SK-N-SH (cell line): ENCODE measurements at regions of chr13 and their contacts with region 1.

Region 1: GRCh38 chr13:36431654-36432511 is at the start of gene CCNA1:
- DNase-seq: peak; percentile 83
- H3K4me3 ChIP-seq: peak within 1 kb of the TSS; percentile 44 to 51
- H3K27ac ChIP-seq: no peak within 1 kb of the TSS
- H3K4me1 ChIP-seq: peaks cover 0 to 8% of the 10 kb centered on the region in 2 experiments; a peak in 1 of 4 replicates
- H3K27me3 ChIP-seq: peaks cover 74% of the 10 kb centered on the region
- CTCF ChIP-seq: no peak
- EP300 ChIP-seq: no peak
- RAD21 ChIP-seq: no peak
- polyA plus RNA-seq, gene CCNA1: 0.21 and 0.23 TPM in 2 replicates

Region 2: DNA sequence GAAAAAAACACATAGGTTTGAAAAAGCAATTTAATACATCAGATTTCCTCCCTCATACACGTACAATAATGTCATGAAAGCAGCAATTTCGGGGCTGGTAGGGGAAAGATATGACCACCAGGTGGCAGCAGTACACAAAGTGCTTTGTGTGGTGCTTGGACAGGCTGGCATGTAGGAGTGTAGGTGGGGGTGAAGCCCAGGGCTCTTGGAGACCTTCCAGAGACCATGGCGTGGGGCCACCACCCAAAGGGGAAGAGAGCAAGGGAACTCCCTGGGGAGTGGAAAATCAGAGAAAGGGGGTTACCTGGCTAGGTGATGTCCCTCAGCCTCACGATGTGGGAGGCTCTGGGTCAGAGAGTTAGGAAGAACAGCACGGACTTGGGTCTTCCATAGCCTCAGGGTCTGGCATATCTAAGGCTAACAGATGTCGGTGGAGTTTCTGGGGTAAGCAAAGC is 11.4 kb before region 1 on chr13:
- CTCF ChIA-PET with region 1: interaction called, 14 read pairs
- POLR2A ChIA-PET with region 1: no interaction called
- DNase-seq: peak; percentile 79
- H3K4me3 ChIP-seq: no peak overlapping the region; a peak in 2 of 4 replicates
- H3K27ac ChIP-seq: no peak overlapping the region
- H3K4me1 ChIP-seq: peaks cover 0 to 3% of the 10 kb centered on the region in 2 experiments; a peak in 2 of 4 replicates
- H3K27me3 ChIP-seq: no peaks in the 10 kb centered on the region
- CTCF ChIP-seq: peak; percentile 93
- EP300 ChIP-seq: no peak
- RAD21 ChIP-seq: peak; percentile 83

Region 3: DNA sequence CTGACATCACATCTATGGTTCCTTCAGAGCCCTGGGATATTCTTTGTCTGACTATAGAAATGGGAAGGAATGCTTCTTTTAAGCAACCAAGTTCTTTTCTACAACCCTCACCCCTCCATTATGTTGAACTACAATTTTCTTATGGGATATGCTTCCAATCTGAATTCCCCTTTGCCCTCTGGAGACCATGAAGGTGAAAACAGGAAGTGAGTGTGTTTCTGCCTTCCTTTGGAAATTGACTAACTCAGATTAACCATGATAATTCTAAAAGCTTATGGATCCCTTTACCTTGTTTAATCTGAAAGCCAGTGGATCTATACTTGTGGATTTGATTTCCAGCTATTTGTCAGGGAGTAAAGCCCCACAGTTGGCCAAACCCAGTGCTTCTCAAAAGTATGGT is 151.1 kb after region 1 on chr13:
- CTCF ChIA-PET with region 1: no interaction called
- POLR2A ChIA-PET with region 1: no interaction called
- DNase-seq: no peak
- H3K4me3 ChIP-seq: no peak overlapping the region
- H3K27ac ChIP-seq: no peak overlapping the region
- H3K4me1 ChIP-seq: no peaks in the 10 kb centered on the region
- H3K27me3 ChIP-seq: no peaks in the 10 kb centered on the region; the same call in 1 of the 2 replicates
- CTCF ChIP-seq: no peak
- EP300 ChIP-seq: no peak
- RAD21 ChIP-seq: no peak